ENCODE measurements at regions of chr15 and their contacts with region 1.

Region 1: DNA sequence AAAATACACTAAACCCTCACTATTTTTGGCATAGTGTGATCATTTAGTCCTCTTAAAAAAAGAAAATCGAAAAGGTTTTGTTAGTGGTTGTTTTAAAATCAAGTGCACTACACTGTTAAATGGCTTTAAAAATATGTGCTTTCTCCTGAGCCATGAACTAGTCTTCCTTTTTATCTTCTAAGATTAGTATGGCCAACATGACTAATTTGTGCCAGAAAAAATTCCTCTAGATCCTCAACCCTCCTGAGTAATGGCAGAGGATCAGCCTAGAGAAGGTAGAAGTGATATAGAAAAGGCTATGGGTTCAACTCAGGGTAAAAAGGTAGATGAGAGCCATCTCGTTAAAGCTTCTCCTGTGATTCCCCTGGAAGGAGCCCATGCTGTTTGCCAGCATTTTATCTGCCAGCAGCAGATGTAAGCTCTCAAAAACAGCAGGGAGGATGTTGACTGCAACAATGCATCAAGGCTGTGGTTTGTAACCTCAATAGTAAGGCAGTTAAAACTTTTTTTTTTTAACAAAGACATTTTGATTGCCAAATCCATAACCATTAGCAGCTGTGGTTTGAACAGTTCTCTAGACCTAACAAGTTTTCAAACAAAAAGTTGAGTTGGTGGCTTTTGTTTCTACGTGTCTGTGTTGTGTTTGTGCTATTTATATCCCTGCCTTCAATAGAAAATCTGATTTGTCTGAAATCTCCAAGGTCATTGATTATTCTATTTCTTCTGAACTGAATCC is 30.2 kb upstream of the ZNF609 start:
- DNase-seq: peak; percentile 80
- H3K4me3 ChIP-seq: no peak overlapping the region
- H3K27ac ChIP-seq: no peak overlapping the region
- H3K4me1 ChIP-seq: peaks cover 13% of the 10 kb centered on the region
- H3K27me3 ChIP-seq: no peaks in the 10 kb centered on the region
- CTCF ChIP-seq: no peak

Region 2: DNA sequence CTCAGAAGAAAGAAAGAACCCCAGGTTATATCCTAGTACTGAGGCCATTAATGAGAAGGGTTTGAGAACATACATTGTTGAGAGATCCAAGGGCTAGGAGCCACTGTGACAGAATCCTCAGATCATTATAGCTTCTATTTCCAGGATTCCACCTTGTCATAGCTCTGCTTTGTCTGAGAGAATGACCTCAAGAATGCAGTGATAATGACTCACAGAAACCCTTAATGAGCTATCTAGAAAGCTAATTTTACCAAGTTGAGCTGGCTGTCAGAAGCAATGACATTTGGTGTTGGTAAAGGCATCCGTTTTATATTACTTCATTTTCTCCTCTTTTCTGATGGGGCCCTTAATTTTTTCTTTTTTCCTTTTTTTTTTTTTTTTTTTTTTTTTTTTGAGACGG is 31.6 kb before region 1 on chr15:
- CTCF ChIA-PET with region 1: no interaction called
- dilution Hi-C with region 1: no loop called
- in situ Hi-C with region 1: no loop called
- intact Hi-C with region 1: no loop called
- DNase-seq: peak; percentile 9
- H3K4me3 ChIP-seq: no peak overlapping the region
- H3K27ac ChIP-seq: no peak overlapping the region
- H3K4me1 ChIP-seq: no peaks in the 10 kb centered on the region
- H3K27me3 ChIP-seq: no peaks in the 10 kb centered on the region
- CTCF ChIP-seq: no peak

Region 3: DNA sequence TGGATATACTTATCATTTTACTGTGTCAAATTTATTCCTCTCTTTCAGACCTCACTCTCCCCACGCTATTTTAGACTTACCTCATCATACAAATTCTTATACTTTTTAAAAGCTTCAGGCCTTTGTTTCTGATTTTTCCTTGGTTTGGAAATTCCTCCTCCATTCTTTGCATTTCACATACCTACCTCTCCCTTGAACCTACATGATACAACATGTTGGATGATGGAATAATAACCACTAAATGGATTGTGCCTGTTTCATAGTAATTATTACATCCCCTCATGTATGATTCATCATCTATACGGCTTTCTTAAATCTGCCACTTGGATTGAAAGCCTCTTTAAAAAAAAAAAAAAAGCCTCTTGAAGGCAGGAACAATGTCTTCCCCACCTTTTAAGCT is 18.0 kb before region 1 on chr15:
- CTCF ChIA-PET with region 1: no interaction called
- dilution Hi-C with region 1: no loop called
- in situ Hi-C with region 1: no loop called
- intact Hi-C with region 1: no loop called
- DNase-seq: peak; percentile 90
- H3K4me3 ChIP-seq: no peak overlapping the region
- H3K27ac ChIP-seq: peak overlapping the region; percentile 94
- H3K4me1 ChIP-seq: peaks cover 6% of the 10 kb centered on the region
- H3K27me3 ChIP-seq: no peaks in the 10 kb centered on the region
- CTCF ChIP-seq: no peak

Region 4: GRCh38 chr15:64503197-64503596 is 73.0 kb after region 1 on chr15:
- CTCF ChIA-PET with region 1: no interaction called
- dilution Hi-C with region 1: loop called (anchors 5 kb)
- in situ Hi-C with region 1: no loop called
- intact Hi-C with region 1: no loop called
- DNase-seq: no peak
- H3K4me3 ChIP-seq: no peak overlapping the region
- H3K27ac ChIP-seq: no peak overlapping the region
- H3K4me1 ChIP-seq: peaks cover 6% of the 10 kb centered on the region
- H3K27me3 ChIP-seq: no peaks in the 10 kb centered on the region
- CTCF ChIP-seq: no peak

Region 5: GRCh38 chr15:64521726-64522164 is 91.6 kb after region 1 on chr15:
- CTCF ChIA-PET with region 1: no interaction called
- dilution Hi-C with region 1: no loop called
- in situ Hi-C with region 1: no loop called
- intact Hi-C with region 1: loop called (anchors 5 kb)
- DNase-seq: peak; percentile 93
- H3K4me3 ChIP-seq: peak overlapping the region in 2 of 3 experiments; percentile 5 to 12
- H3K27ac ChIP-seq: peak overlapping the region; percentile 59
- H3K4me1 ChIP-seq: peaks cover 55% of the 10 kb centered on the region
- H3K27me3 ChIP-seq: no peaks in the 10 kb centered on the region
- CTCF ChIP-seq: no peak

Region 6: GRCh38 chr15:64651573-64652260 is 221.5 kb after region 1 on chr15:
- CTCF ChIA-PET with region 1: no interaction called
- dilution Hi-C with region 1: no loop called
- in situ Hi-C with region 1: no loop called
- intact Hi-C with region 1: loop called (anchors 2 kb)
- DNase-seq: peak; percentile 20
- H3K4me3 ChIP-seq: no peak overlapping the region
- H3K27ac ChIP-seq: no peak overlapping the region
- H3K4me1 ChIP-seq: no peaks in the 10 kb centered on the region
- H3K27me3 ChIP-seq: no peaks in the 10 kb centered on the region
- CTCF ChIP-seq: no peak